ENCODE measurements at regions of chr7 and their contacts with region 1.

Region 1: GRCh38 chr7:151566897-151567320 is 47.2 kb upstream of the RHEB start:
- DNase-seq: peak; percentile 70
- H3K4me3 ChIP-seq: no peak overlapping the region
- H3K27ac ChIP-seq: peak overlapping the region; percentile 55 to 80 (median 67)
- H3K4me1 ChIP-seq: peaks cover 0 to 16% (median 13%) of the 10 kb centered on the region in 4 donors
- H3K27me3 ChIP-seq: no peaks in the 10 kb centered on the region
- CTCF ChIP-seq: no peak
- EP300 ChIP-seq: no peak
- POLR2A ChIP-seq: no peak

Region 2: DNA sequence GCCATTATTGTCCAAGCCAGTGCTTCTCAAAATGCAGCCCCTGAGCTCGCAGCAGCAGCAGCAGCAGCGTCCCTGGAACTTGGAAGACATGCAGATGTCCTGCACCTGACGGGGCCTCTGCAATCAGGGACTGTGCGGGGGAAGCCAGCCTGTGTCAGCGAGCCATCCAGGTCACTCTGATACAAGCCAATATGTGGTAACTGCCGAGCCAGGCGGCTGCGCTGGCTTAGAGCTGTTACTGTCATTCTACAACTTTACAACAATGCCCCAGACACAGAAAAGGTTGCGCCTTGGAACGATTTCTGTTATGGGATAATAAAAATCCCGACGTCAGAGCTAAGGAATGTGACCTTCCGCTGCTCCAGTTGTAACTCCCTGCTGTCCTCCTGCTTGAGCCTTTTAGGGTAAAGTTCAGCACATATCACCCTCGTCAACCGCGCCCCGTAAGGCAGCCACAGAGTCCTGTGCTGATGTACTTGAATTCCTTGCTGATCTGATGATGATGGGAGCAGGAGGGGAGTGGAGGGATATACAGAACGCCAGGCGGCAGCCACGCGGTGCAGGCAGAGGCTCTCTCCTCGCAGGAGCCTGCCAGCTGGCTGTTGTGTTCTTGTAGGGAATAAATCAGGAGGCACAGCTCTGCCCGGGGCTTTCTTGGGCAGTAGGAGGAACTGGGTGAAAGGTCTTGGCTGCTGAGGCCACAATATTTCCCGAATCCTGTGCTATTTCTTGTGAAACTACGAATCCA is 107.0 kb before region 1 on chr7:
- intact Hi-C with region 1: no loop called
- DNase-seq: peak; percentile 98
- H3K4me3 ChIP-seq: peak overlapping the region in 3 of 4 donors; percentile 13 to 29 (median 27)
- H3K27ac ChIP-seq: peak overlapping the region; percentile 85 to 98 (median 96)
- H3K4me1 ChIP-seq: peaks cover 0 to 34% (median 32%) of the 10 kb centered on the region in 4 donors
- H3K27me3 ChIP-seq: no peaks in the 10 kb centered on the region
- CTCF ChIP-seq: peak in 2 of 4 experiments; percentile 13 to 23
- EP300 ChIP-seq: peak; percentile 70 to 99 (median 92)
- POLR2A ChIP-seq: peak in 1 of 2 donors; percentile 12

Region 3: GRCh38 chr7:151626422-151627115 is 59.7 kb after region 1 on chr7:
- intact Hi-C with region 1: loop called (anchors 10 kb)
- DNase-seq: no peak
- H3K4me3 ChIP-seq: no peak overlapping the region
- H3K27ac ChIP-seq: peak overlapping the region in 3 of 4 donors; percentile 40 to 95 (median 95)
- H3K4me1 ChIP-seq: peaks cover 0 to 72% (median 56%) of the 10 kb centered on the region in 4 donors
- H3K27me3 ChIP-seq: no peaks in the 10 kb centered on the region
- CTCF ChIP-seq: peak in 3 of 4 experiments; percentile 44 to 54 (median 51)
- EP300 ChIP-seq: no peak
- POLR2A ChIP-seq: no peak

Region 4: DNA sequence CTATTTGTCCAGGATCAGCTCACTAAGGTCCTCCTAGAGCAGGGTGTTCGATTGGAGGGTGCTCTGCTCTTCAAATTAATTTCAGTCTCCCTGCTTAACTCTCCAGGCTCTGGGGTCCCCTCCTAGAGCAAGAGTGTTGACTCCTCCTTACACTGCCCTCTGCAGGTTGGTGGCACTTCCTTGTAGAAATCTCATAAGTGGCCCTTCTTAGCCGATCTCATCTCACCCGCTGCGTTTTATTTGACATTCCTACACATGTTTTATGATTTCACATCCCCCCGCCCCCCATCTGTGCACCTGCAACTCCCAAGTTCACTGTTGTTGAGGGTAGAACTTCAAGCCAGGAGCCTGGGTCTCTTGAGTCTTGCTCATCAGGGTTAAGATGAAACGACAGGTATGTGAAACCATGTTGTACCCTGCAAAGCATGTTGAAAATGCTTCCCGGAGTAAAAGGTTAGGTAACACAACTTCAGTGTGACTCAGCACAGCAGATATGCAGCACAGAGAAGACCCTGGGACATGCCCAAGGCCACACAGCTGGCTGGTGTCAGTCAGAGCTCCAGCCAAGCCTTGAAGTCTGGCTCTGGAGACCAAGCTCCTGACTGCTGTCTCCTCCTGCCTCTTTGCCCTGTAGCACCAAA is 138.8 kb after region 1 on chr7:
- intact Hi-C with region 1: loop called (anchors 5 kb)
- DNase-seq: no peak
- H3K4me3 ChIP-seq: peak overlapping the region in 2 of 4 donors; percentile 1 to 5
- H3K27ac ChIP-seq: peak overlapping the region in 1 of 4 donors; percentile 32
- H3K4me1 ChIP-seq: peaks cover 0 to 19% (median 12%) of the 10 kb centered on the region in 4 donors
- H3K27me3 ChIP-seq: no peaks in the 10 kb centered on the region
- CTCF ChIP-seq: peak in 3 of 4 experiments; percentile 42 to 49 (median 49)
- EP300 ChIP-seq: no peak
- POLR2A ChIP-seq: no peak